Sigmoid colon (tissue), 7 donors: ENCODE measurements at regions of chr16 and their contacts with region 1.

Region 1: DNA sequence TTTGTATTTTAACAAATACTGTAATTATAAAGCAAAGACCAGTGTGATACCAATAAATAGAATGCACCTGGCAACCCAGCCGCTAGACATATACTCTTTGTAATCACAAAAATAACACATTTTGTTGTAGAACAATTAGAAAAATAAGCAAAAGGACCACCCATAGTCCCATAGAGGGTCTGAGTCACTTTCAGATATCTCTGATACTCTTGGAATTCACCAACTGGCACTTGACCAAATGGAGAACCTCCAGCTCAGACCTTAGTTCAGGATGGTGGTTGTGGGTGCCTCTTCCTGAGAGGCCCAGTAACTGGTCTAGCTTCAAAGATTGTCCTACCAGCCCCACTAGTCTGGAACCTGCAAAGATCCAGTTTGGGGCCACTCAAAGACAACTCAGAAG is 789 bp upstream of the TERF2 start:
- DNase-seq: no peak
- H3K4me3 ChIP-seq: no peak overlapping the region
- H3K27ac ChIP-seq: peak overlapping the region; percentile 91 to 98 (median 92)
- H3K4me1 ChIP-seq: peaks cover 0 to 23% (median 12%) of the 10 kb centered on the region in 4 donors
- H3K27me3 ChIP-seq: no peaks in the 10 kb centered on the region
- CTCF ChIP-seq: no peak
- EP300 ChIP-seq: no peak
- POLR2A ChIP-seq: no peak

Region 2: GRCh38 chr16:69310653-69311532 is 75.7 kb before region 1 on chr16 and contains the start of gene VPS4A:
- intact Hi-C with region 1: no loop called
- DNase-seq: peak; percentile 98
- H3K4me3 ChIP-seq: peak within 1 kb of the TSS; percentile 74 to 89 (median 85)
- H3K27ac ChIP-seq: peak within 1 kb of the TSS; percentile 87 to 93 (median 88)
- H3K4me1 ChIP-seq: peaks cover 0 to 28% (median 20%) of the 10 kb centered on the region in 4 donors
- H3K27me3 ChIP-seq: no peaks in the 10 kb centered on the region
- CTCF ChIP-seq: peak; percentile 28 to 94 (median 50)
- EP300 ChIP-seq: no peak
- POLR2A ChIP-seq: peak in 1 of 2 donors; percentile 19
- total RNA-seq, gene VPS4A: 31.7 to 39.3 (median 34.8) TPM

Region 3: DNA sequence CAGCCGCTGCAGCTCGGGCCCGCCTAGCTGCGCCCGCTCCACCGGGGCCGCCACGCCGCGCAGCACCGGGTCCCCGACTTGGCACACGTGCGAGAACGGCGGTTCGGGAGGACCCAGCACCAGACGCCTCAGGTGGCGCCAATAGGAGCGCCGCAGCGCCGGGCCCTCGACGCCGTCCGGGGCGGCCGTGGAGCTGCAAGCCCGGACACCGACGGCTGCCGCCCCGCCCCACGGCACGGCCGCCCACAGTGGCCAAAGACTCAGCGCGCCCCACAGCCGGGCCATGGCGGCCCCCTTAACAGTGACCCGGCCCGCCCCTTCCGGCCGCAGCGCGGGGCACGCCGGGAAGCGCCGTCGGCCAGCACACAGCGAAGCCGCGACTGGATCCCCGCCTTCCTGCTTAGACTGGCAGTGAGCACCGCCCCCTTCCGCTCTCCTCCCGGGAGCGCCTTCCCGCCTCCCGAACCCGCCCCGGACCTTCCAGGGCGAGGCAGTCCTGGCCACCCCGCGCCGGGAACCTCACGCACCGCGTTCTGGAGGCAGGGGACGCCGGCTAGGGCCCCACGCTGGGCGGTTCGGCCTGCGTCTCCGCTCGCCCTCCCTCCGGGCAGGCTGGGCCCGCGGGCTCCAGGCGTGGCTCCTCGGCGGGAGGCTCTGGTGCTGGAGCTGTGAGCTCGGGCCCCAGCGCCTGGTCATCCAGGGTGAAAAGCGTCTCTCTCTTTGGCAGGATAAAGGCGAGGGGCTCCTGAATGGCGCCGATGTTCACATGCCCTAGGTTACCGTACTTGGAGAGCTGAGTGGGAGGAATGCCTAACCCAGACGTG is 56.1 kb before region 1 on chr16 and contains the start of gene PDF:
- intact Hi-C with region 1: loop called (anchors 2 kb)
- DNase-seq: peak; percentile 96
- H3K4me3 ChIP-seq: peak within 1 kb of the TSS; percentile 67 to 97 (median 88)
- H3K27ac ChIP-seq: peak within 1 kb of the TSS; percentile 82 to 97 (median 91)
- H3K4me1 ChIP-seq: peaks cover 0 to 55% (median 51%) of the 10 kb centered on the region in 4 donors
- H3K27me3 ChIP-seq: no peaks in the 10 kb centered on the region
- CTCF ChIP-seq: no peak
- EP300 ChIP-seq: no peak
- POLR2A ChIP-seq: peak; percentile 59 to 74
- total RNA-seq, gene PDF: 8.6 to 18.6 (median 10.5) TPM

Region 4: GRCh38 chr16:69424053-69424934 is 37.7 kb after region 1 on chr16 and contains the start of gene CYB5B:
- intact Hi-C with region 1: loop called (anchors 5 kb)
- DNase-seq: peak; percentile 97
- H3K4me3 ChIP-seq: peak within 1 kb of the TSS; percentile 50 to 77 (median 70)
- H3K27ac ChIP-seq: peak within 1 kb of the TSS; percentile 78 to 85 (median 81)
- H3K4me1 ChIP-seq: peaks cover 0 to 12% (median 8%) of the 10 kb centered on the region in 4 donors
- H3K27me3 ChIP-seq: no peaks in the 10 kb centered on the region
- CTCF ChIP-seq: no peak
- EP300 ChIP-seq: no peak
- POLR2A ChIP-seq: peak; percentile 58 to 78
- total RNA-seq, gene CYB5B: 24.4 to 43.8 (median 34.7) TPM